ENCODE measurements at regions of chr10 and their contacts with region 1.

Region 1: DNA sequence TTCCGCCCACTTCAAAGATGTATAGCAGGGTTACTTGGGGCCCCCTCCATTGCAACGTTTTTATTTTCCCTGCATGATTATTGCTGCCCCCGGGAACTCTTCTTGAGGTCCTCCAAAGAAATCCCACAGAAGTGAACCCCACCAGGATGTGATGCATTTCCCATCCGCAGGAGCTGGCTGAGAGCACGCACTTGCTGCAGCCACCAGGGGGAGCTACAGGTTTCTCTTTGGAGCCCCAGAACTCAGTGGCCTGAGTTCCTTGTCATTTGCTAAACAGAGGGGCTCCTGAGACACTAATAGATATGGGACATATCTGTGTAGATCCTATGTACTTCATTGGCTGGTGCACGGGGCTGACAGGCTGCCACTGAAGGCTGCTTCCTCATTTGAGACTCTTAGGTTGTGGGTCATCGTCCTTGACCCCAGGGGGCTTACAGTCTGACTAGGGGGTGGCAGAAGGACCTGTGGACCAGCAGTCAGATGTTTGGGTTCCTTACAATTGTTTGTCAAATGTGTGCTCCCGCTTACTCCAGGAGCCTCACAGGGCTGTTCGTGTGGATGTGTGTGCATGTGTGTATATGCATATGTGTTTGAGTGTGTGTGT is 52.3 kb upstream of the ENO4 start:
- DNase-seq: peak; percentile 78
- ATAC-seq: peak; percentile 79 to 83

Region 2: DNA sequence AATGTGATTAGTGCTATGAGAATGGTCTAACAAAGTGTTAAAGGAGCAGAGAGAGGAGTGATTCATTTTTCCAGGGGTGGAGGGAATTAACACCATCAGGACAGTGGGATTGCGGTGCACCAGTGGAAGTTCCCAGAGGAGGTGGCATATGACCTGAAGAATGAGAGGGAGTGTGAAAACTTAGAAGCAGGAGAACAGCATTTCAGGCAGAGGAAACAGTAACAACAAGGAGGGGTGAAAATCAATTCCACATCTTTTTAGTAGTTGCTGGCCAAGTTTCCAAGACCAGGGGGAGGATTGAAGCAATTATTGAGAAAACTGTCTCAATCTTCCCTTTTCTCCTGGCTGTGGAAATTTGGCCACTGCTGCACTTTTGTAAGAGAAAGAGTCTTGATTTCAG is 496.5 kb before region 1 on chr10:
- intact Hi-C with region 1: no loop called
- DNase-seq: no peak
- ATAC-seq: no peak

Region 3: GRCh38 chr10:117074621-117075020 is 277.6 kb after region 1 on chr10:
- intact Hi-C with region 1: loop called in 1 of 2 experiments (anchors 5 kb)
- DNase-seq: no peak
- ATAC-seq: no peak

Region 4: DNA sequence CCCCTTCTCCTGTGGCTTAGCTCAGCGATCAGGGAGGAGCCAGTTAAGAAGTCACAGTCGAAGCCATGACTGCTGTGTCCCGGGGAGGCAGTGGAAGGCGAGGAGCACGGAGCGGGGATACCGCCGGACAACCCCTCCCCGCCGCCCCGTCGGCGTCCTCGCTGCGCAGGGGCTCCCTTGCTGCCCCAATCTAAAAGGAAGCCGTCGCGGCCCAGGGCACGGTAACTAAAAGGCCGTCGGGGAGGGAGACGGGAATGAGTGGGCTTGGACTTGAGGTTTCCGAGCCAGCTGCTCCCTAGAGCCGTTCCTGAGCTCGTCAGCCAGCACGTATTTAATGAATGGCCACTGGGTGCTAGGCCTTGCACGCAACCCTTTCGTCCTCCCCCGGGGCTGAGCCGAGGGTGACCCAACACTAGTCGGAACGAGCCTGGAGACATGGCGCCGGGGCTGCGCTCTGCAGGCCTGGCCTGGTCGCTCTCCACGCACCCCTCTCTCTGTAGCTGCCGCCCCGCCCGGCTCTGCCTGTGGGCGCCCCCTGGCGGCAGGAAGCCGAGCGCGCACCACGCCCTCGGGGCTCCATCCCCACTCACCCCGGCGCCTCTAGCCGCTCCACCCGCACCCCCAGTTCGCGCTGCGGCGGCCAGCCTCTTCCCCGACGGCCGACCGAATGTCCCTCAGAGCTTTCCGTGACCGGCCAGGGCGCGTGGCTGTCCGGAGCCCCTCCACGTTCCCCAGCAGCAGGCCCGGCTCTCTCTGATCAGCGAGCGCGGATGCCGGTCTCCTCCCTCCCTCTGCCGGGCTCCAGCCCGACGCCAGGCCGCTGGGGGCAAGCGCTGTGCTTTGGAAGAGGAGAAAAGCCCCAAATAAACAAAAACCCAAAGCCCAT is 371.0 kb after region 1 on chr10:
- intact Hi-C with region 1: loop called in 1 of 2 experiments (anchors 2 kb)
- DNase-seq: peak; percentile 60
- ATAC-seq: peak; percentile 86 to 95

Region 5: GRCh38 chr10:117174439-117175214 is 377.6 kb after region 1 on chr10:
- intact Hi-C with region 1: loop called (anchors 1 to 2 kb)
- DNase-seq: peak; percentile 74
- ATAC-seq: peak; percentile 86 to 92

Region 6: DNA sequence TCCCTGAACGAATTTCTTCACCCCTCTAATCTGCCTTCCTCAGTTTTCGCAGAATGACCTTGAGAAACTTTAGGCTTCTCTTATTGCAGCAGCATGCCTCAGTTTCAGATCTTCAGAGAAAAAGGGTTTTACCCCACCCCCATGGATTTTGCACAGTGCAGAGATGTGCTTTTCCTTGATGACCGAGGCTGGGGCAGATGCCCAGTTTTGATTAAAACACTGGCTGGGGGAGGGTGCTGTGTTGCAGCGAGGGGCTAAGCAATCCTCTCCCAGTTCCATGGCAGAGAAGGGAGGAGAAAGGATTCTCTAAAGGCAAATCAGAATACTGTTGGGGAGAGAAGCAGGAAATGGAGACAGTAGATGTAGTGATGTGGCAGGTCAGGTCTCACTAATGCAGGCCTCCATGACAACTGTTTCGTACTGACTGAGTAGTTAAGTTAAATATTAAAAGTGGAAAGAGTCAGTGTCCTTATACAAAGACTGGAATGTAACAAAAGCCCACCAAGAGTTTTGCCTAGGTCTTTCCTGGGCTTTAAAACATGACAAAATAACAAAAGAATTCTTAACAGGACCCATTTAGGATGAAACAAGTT is 629.1 kb after region 1 on chr10:
- intact Hi-C with region 1: no loop called
- DNase-seq: no peak
- ATAC-seq: no peak